Activated B cell treated with CpG ODN at 0.5 μM for 24 hours (primary cell): ENCODE measurements at regions of chr2 and their contacts with region 1.

Region 1: DNA sequence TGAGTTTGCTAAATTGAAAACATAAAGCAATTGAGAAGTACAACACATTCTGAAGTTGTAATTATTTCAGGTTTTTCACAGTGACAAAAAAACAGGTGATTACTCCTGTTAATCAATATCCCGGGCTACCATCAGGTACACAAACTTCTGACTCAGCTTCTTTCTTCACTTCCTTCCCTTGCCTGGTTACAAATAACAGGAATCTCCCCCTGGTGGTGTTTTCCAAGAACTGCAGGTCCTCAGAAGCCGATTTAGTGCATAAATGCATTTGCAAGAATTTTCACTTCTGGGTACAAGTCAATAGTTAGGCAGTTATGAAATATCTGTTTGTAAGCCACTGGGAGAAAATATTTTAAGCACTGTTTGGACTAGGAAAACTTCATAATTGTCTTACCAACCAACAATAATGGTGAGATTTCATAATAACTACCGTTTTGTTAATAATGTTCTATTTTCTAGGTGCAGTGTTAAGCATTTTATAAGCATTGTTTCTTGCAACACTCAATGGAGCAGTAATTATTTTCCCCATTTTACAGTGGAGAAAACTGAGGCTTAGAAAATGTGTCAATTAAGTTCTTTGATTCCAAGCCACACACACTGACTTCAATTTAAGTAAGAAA is 12.4 kb upstream of the GMCL1 start:
- DNase-seq: no peak
- ATAC-seq: peak; percentile 89
- H3K4me3 Mint-ChIP-seq: no peak overlapping the region
- H3K27ac Mint-ChIP-seq: no peak overlapping the region
- H3K4me1 Mint-ChIP-seq: peaks cover 5% of the 10 kb centered on the region
- H3K27me3 Mint-ChIP-seq: no peaks in the 10 kb centered on the region
- CTCF ChIP-seq: peak; percentile 64

Region 2: GRCh38 chr2:69385441-69386151 is 431.4 kb before region 1 on chr2:
- CTCF ChIA-PET with region 1: no interaction called
- POLR2A ChIA-PET with region 1: no interaction called
- intact Hi-C with region 1: no loop called
- DNase-seq: no peak
- ATAC-seq: no peak
- H3K4me3 Mint-ChIP-seq: peak overlapping the region; percentile 88
- H3K27ac Mint-ChIP-seq: peak overlapping the region; percentile 65
- H3K4me1 Mint-ChIP-seq: peaks cover 46% of the 10 kb centered on the region
- H3K27me3 Mint-ChIP-seq: no peaks in the 10 kb centered on the region
- CTCF ChIP-seq: no peak

Region 3: DNA sequence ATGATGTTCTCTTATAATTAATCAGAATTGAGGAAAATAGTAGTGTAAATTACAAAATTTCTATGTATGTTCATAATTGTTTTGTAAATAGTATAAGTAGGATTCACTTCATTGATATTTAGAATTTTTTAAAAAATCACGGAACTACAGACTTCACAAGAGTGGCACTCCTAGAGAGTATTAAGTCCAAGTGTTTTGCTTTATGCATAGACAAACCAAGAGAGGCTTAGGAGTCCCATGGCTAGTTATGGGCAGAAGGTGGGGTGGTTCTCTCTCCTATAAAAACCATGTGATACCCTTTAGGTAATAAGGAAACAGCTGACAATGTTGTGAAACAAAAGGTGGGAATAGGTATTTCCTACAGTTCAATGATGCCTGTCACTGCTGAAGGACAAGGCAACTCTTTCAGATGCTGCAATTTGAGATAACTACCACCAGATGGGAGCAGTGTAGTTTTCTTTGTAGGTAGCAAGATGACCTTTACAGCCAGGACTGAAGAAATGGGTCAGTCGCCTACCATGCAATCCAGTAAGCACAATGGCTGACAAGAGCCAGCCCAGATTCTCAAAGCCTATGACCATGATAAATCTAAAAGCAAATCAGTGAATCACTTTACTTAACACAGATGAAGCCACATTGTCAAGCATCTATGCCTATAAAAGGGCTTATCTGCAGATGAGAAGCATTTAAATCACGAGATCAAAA is 257.4 kb before region 1 on chr2:
- CTCF ChIA-PET with region 1: no interaction called
- POLR2A ChIA-PET with region 1: no interaction called
- intact Hi-C with region 1: loop called (anchors 1 kb)
- DNase-seq: no peak
- ATAC-seq: peak; percentile 42
- H3K4me3 Mint-ChIP-seq: no peak overlapping the region
- H3K27ac Mint-ChIP-seq: no peak overlapping the region
- H3K4me1 Mint-ChIP-seq: peaks cover 3% of the 10 kb centered on the region
- H3K27me3 Mint-ChIP-seq: peaks cover 14% of the 10 kb centered on the region
- CTCF ChIP-seq: peak; percentile 45

Region 4: GRCh38 chr2:69724540-69725159 is 92.4 kb before region 1 on chr2:
- CTCF ChIA-PET with region 1: interaction called, 362 read pairs
- POLR2A ChIA-PET with region 1: interaction called, 12 read pairs
- intact Hi-C with region 1: loop called (anchors 1 kb)
- DNase-seq: peak; percentile 74
- ATAC-seq: peak; percentile 75
- H3K4me3 Mint-ChIP-seq: peak overlapping the region; percentile 52
- H3K27ac Mint-ChIP-seq: no peak overlapping the region
- H3K4me1 Mint-ChIP-seq: peaks cover 6% of the 10 kb centered on the region
- H3K27me3 Mint-ChIP-seq: peaks cover 6% of the 10 kb centered on the region
- CTCF ChIP-seq: peak; percentile 84

Region 5: GRCh38 chr2:69741619-69742466 is 75.2 kb before region 1 on chr2 and contains the start of gene ANXA4:
- CTCF ChIA-PET with region 1: interaction called, 38 read pairs
- POLR2A ChIA-PET with region 1: interaction called, 3 read pairs
- intact Hi-C with region 1: loop called (anchors 1 kb)
- DNase-seq: peak; percentile 64
- ATAC-seq: peak; percentile 85
- H3K4me3 Mint-ChIP-seq: peak within 1 kb of the TSS; percentile 95
- H3K27ac Mint-ChIP-seq: peak within 1 kb of the TSS; percentile 89
- H3K4me1 Mint-ChIP-seq: peaks cover 39% of the 10 kb centered on the region
- H3K27me3 Mint-ChIP-seq: no peaks in the 10 kb centered on the region
- CTCF ChIP-seq: no peak
- total RNA-seq, gene ANXA4: 32.0 and 35.4 TPM in 2 replicates

Region 6: DNA sequence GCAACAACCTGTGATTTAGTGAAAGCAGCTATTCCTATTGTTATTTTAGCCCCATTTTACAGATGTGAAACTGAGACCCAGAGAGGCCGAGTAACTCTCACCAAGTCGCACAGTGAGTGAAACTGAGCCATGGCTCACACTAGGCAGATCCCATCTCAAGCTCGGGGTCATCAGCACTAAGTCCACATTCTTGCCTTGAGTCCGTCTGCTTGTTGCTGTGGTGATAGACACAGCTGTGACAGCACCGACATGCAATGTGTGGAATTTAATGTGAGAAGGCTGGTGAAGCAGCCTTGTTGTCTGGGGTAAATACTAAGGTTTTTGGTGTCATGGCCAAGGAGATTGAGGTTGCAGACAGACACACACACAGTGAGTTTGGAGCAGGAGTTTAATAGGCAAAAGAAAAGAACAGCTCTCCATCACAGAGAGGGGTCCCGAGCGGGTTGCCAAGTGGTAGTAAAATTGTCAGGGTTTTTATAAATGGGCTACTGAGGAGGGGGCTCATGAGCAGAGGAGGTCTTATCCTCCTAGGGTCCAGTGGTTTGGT is 27.8 kb before region 1 on chr2:
- CTCF ChIA-PET with region 1: interaction called, 13 read pairs
- POLR2A ChIA-PET with region 1: no interaction called
- intact Hi-C with region 1: no loop called
- DNase-seq: no peak
- ATAC-seq: peak; percentile 26
- H3K4me3 Mint-ChIP-seq: peak overlapping the region; percentile 21
- H3K27ac Mint-ChIP-seq: peak overlapping the region; percentile 37
- H3K4me1 Mint-ChIP-seq: peaks cover 41% of the 10 kb centered on the region
- H3K27me3 Mint-ChIP-seq: no peaks in the 10 kb centered on the region
- CTCF ChIP-seq: no peak

Region 7: GRCh38 chr2:69829256-69830046 is 12.4 kb after region 1 on chr2 and contains the start of gene GMCL1:
- CTCF ChIA-PET with region 1: interaction called, 28 read pairs
- POLR2A ChIA-PET with region 1: no interaction called
- intact Hi-C with region 1: loop called (anchors 1 kb)
- DNase-seq: peak; percentile 99
- ATAC-seq: peak; percentile 95
- H3K4me3 Mint-ChIP-seq: peak within 1 kb of the TSS; percentile 94
- H3K27ac Mint-ChIP-seq: peak within 1 kb of the TSS; percentile 96
- H3K4me1 Mint-ChIP-seq: peaks cover 29% of the 10 kb centered on the region
- H3K27me3 Mint-ChIP-seq: no peaks in the 10 kb centered on the region
- CTCF ChIP-seq: no peak
- total RNA-seq, gene GMCL1: 8.0 and 13.0 TPM in 2 replicates